ENCODE measurements at regions of chr12 and their contacts with region 1.

Region 1: DNA sequence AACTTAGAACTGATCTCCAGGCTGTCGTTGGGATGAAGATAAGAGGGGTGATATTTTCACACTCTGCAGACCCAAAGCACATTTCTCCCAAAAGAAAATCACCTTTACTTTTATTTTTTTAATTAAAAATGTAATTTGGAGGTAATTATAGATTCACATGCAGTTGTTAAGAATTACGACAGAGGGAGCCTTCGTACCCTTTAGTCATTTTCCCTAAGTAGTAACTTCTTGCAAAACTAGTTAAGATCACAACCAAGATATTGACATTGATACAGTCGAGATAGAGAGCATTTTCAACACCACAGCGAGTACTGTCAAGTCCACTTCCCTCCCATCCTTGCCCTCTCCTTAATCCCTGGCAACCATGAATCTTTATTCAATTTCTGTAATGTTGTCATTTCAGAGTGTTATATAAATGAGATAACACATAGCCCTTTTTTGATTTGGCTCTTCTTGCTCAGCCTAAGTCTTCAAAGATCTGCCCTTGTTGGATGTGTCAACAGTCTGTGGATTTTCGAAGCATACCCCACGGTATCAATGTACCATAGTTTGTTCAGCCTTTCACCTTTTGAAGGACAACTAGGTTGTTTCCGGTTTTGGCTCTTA is 39.6 kb downstream of the DNAH10 start:
- DNase-seq: peak; percentile 37
- H3K4me3 ChIP-seq: no peak overlapping the region
- H3K27ac ChIP-seq: no peak overlapping the region
- H3K4me1 ChIP-seq: no peaks in the 10 kb centered on the region
- H3K27me3 ChIP-seq: no peaks in the 10 kb centered on the region
- CTCF ChIP-seq: peak; percentile 65

Region 2: DNA sequence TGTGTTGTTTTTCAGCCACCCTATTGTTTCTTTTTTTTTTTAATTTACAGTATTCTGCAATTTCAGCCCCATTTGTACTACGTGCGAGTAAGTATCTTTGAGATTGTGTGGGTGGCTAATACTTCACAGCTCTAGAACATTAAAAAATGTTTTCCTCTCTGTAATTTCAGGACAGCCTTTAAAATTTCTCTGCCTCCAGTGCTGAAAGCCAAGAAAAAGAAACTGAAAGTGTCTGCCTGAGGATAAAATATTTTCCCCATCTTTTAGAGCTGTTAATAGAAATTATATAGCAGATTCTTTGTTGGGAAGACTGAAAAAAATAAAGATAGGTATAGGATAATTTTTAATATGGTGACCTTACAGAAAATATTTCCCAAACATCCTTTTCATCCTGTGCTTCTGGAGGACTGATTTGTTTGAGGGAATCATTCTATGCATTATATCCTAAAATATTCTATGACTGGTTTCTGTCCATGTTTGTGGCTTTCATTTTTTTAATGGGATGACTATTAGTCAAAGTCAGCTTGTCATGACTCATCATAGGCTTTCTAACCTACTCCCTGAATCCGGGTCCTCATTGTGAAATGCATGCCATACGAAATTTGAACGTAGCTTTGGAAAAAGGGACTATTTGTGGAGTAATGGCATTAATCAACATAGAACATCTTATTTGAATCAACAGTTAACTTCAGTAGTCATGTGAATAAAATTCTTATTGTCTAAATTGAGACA is 141.5 kb before region 1 on chr12:
- CTCF ChIA-PET with region 1: no interaction called
- POLR2A ChIA-PET with region 1: no interaction called
- intact Hi-C with region 1: no loop called
- DNase-seq: peak; percentile 27
- H3K4me3 ChIP-seq: no peak overlapping the region
- H3K27ac ChIP-seq: no peak overlapping the region
- H3K4me1 ChIP-seq: no peaks in the 10 kb centered on the region
- H3K27me3 ChIP-seq: no peaks in the 10 kb centered on the region
- CTCF ChIP-seq: no peak

Region 3: GRCh38 chr12:123747309-123747708 is 54.4 kb before region 1 on chr12:
- CTCF ChIA-PET with region 1: interaction called, 12 read pairs
- POLR2A ChIA-PET with region 1: no interaction called
- intact Hi-C with region 1: no loop called
- DNase-seq: no peak
- H3K4me3 ChIP-seq: no peak overlapping the region
- H3K27ac ChIP-seq: no peak overlapping the region
- H3K4me1 ChIP-seq: no peaks in the 10 kb centered on the region
- H3K27me3 ChIP-seq: no peaks in the 10 kb centered on the region
- CTCF ChIP-seq: no peak

Region 4: GRCh38 chr12:124030510-124030909 is 228.8 kb after region 1 on chr12:
- CTCF ChIA-PET with region 1: no interaction called
- POLR2A ChIA-PET with region 1: no interaction called
- intact Hi-C with region 1: loop called (anchors 2 kb)
- DNase-seq: peak; percentile 27
- H3K4me3 ChIP-seq: no peak overlapping the region
- H3K27ac ChIP-seq: no peak overlapping the region
- H3K4me1 ChIP-seq: no peaks in the 10 kb centered on the region
- H3K27me3 ChIP-seq: no peaks in the 10 kb centered on the region
- CTCF ChIP-seq: no peak

Region 5: GRCh38 chr12:124233041-124233796 is 431.5 kb after region 1 on chr12:
- CTCF ChIA-PET with region 1: no interaction called
- POLR2A ChIA-PET with region 1: no interaction called
- intact Hi-C with region 1: no loop called
- DNase-seq: no peak
- H3K4me3 ChIP-seq: no peak overlapping the region
- H3K27ac ChIP-seq: no peak overlapping the region
- H3K4me1 ChIP-seq: no peaks in the 10 kb centered on the region
- H3K27me3 ChIP-seq: no peaks in the 10 kb centered on the region
- CTCF ChIP-seq: no peak

Measured in A673 (cell line).